Activated T-helper 1 cell treated with anti-CD3 and anti-CD28 coated beads, Interleukin-12 subunit alpha, Interleukin-12 subunit beta, Interleukin-2, Interleukin-4 antibody, amounts not matched to agents 30 ng/mL and 10 ng/mL and 1 ng/mL, durations not matched to agents 14 hours and 24 hours and 36 hours (primary cell): ENCODE measurements at regions of chr2 and their contacts with region 1.

Region 1: GRCh38 chr2:25794544-25795276 is 83.6 kb downstream of the ASXL2 start:
- DNase-seq: no peak
- H3K4me3 Mint-ChIP-seq: peak overlapping the region; percentile 87
- H3K27ac Mint-ChIP-seq: peak overlapping the region; percentile 86
- H3K4me1 Mint-ChIP-seq: peaks cover 67% of the 10 kb centered on the region
- H3K27me3 Mint-ChIP-seq: no peaks in the 10 kb centered on the region

Region 2: GRCh38 chr2:25586726-25587144 is 208.0 kb before region 1 on chr2:
- intact Hi-C with region 1: loop called (anchors 10 kb)
- DNase-seq: no peak
- H3K4me3 Mint-ChIP-seq: peak overlapping the region; percentile 71
- H3K27ac Mint-ChIP-seq: peak overlapping the region; percentile 92
- H3K4me1 Mint-ChIP-seq: peaks cover 27% of the 10 kb centered on the region
- H3K27me3 Mint-ChIP-seq: no peaks in the 10 kb centered on the region

Region 3: DNA sequence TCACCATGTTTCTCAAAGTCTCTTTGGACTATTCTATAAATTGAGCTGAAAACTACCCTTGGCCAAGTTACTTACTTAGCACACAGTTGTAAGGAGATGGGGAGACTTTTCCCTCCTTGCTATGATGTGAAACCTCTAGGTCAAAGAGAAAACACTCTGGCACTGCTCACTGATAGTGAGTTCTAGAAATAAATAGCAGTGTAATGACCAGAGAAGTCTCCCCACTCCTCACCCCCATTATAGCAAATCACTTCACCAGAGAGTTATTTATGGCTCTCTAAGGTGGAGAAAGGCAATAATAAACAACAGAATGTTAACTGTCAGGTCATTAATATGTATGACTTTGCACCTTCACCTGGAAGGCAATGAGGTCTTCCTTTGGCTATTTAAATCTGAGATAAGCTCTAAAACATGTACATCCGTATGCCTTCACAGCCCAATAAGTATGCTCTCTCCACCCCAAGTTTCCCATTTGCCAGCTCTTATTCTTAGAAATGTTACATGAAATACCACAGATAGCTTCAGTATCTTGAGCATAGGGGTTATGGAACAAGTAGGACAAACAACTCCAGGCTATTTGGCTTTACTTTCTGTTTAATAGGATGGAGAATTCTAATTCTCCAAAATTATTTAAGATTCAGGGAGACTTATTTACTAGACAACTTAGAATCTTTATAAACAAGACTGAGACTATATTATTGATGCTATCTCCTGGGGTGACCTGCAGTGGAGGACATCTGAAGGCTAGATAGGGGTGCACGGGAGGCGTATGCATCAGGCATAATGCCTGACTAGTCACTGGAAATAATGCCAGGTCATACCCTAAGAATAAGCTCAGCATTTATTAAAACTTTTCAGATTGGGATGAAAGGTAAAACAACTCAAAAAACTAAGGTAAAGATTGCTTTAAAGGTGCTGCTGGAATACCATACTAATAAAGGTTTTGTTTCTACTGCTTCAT is 56.0 kb before region 1 on chr2:
- intact Hi-C with region 1: no loop called
- DNase-seq: no peak
- H3K4me3 Mint-ChIP-seq: no peak overlapping the region
- H3K27ac Mint-ChIP-seq: no peak overlapping the region
- H3K4me1 Mint-ChIP-seq: peaks cover 17% of the 10 kb centered on the region
- H3K27me3 Mint-ChIP-seq: no peaks in the 10 kb centered on the region

Region 4: GRCh38 chr2:25749676-25750075 is 45.0 kb before region 1 on chr2:
- intact Hi-C with region 1: loop called (anchors 5 kb)
- DNase-seq: no peak
- H3K4me3 Mint-ChIP-seq: no peak overlapping the region
- H3K27ac Mint-ChIP-seq: peak overlapping the region; percentile 2
- H3K4me1 Mint-ChIP-seq: peaks cover 33% of the 10 kb centered on the region
- H3K27me3 Mint-ChIP-seq: no peaks in the 10 kb centered on the region

Region 5: GRCh38 chr2:25817630-25818029 is 22.9 kb after region 1 on chr2:
- intact Hi-C with region 1: loop called (anchors 1 kb)
- DNase-seq: no peak
- H3K4me3 Mint-ChIP-seq: no peak overlapping the region
- H3K27ac Mint-ChIP-seq: peak overlapping the region; percentile 59
- H3K4me1 Mint-ChIP-seq: peaks cover 60% of the 10 kb centered on the region
- H3K27me3 Mint-ChIP-seq: peaks cover 2% of the 10 kb centered on the region

Region 6: GRCh38 chr2:25825238-25825637 is 30.5 kb after region 1 on chr2:
- intact Hi-C with region 1: loop called (anchors 1 kb)
- DNase-seq: peak; percentile 26
- H3K4me3 Mint-ChIP-seq: peak overlapping the region; percentile 50
- H3K27ac Mint-ChIP-seq: peak overlapping the region; percentile 69
- H3K4me1 Mint-ChIP-seq: peaks cover 69% of the 10 kb centered on the region
- H3K27me3 Mint-ChIP-seq: no peaks in the 10 kb centered on the region

Region 7: GRCh38 chr2:25831746-25832449 is 37.2 kb after region 1 on chr2:
- intact Hi-C with region 1: loop called (anchors 1 kb)
- DNase-seq: no peak
- H3K4me3 Mint-ChIP-seq: peak overlapping the region; percentile 63
- H3K27ac Mint-ChIP-seq: peak overlapping the region; percentile 90
- H3K4me1 Mint-ChIP-seq: peaks cover 49% of the 10 kb centered on the region
- H3K27me3 Mint-ChIP-seq: no peaks in the 10 kb centered on the region